ENCODE measurements at regions of chr11 and their contacts with region 1.

Region 1: DNA sequence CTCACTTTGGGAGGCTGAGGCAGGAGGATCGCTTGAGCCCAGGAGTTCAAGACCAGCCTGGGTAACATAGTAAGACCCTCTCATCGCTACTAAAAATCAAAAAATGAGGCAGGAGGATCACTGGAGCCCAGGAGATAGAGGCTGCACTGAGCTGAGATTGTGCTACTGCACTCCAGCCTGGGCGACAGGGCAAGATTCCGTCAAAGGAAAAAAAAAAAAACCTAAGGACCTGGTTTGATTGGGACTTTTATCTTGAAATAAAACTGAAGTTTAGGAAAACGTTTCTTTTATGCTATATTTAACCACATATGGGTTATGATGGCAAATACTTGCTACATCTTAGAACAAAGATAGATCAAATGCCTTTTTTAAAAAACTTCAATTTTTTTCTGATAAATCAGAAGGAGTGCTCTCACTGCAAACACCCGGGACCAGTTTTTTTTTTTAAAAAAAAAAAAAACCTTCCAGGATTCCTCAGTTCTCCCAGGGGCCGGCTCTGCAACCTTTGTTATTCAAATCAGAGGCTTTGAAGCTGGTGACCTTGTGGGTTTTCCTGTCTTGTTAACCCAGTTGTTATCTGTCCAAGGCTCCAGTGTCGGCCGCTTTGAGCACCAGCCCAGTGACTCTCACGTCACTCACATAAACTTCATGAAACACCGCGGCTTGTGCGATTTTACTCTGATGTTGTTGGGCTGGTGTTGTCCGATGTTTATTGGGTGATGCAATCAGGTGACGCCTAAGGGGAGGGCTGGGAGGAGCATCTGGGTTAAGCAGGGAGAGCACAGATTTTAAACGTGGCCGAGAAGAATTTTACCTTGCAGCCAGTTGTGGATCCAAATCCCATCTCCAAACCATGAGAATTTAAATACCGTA is 24.7 kb upstream of the SLC22A12 start:
- DNase-seq: peak; percentile 75
- H3K4me3 ChIP-seq: no peak overlapping the region
- H3K27ac ChIP-seq: peak overlapping the region in 6 of 8 donors; percentile 9 to 48 (median 27)
- H3K4me1 ChIP-seq: peaks cover 0 to 36% (median 17%) of the 10 kb centered on the region in 6 donors
- H3K27me3 ChIP-seq: no peaks in the 10 kb centered on the region
- CTCF ChIP-seq: no peak
- POLR2A ChIP-seq: no peak

Region 2: DNA sequence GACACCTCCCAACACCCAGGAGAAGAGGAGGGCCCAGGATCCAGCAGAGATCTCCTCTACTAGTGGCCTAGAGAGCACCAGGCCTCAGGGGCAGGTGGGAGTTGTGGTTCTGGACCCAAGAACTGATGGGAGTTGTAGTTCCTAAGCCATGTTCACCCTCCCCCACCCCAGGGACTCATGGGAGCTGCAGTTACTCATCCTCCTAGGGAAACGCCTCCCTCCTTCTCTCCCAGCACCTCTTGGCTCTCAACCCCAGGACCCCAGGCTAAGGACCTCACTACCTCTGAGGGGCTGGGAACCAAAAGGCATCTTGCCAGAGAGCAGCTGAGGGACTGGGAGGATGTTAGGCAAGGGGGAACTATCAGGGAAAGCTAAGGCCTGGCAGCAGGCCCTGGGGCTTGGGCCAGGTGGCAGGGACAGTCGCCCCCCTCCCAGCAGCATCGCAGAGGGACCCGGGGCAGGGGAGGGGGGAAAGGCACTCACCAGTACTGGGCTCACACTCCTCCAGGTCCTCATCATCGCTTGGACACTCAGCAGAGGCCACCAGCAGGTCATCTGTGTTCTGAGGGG is 53.6 kb after region 1 on chr11:
- intact Hi-C with region 1: loop called (anchors 10 kb)
- DNase-seq: no peak
- H3K4me3 ChIP-seq: no peak overlapping the region
- H3K27ac ChIP-seq: peak overlapping the region in 7 of 8 donors; percentile 33 to 68 (median 62)
- H3K4me1 ChIP-seq: peaks cover 10 to 41% (median 29%) of the 10 kb centered on the region in 6 donors
- H3K27me3 ChIP-seq: no peaks in the 10 kb centered on the region
- CTCF ChIP-seq: no peak
- POLR2A ChIP-seq: no peak